Ascending aorta (tissue), 2 donors: ENCODE measurements at regions of chr10 and their contacts with region 1.

Region 1: DNA sequence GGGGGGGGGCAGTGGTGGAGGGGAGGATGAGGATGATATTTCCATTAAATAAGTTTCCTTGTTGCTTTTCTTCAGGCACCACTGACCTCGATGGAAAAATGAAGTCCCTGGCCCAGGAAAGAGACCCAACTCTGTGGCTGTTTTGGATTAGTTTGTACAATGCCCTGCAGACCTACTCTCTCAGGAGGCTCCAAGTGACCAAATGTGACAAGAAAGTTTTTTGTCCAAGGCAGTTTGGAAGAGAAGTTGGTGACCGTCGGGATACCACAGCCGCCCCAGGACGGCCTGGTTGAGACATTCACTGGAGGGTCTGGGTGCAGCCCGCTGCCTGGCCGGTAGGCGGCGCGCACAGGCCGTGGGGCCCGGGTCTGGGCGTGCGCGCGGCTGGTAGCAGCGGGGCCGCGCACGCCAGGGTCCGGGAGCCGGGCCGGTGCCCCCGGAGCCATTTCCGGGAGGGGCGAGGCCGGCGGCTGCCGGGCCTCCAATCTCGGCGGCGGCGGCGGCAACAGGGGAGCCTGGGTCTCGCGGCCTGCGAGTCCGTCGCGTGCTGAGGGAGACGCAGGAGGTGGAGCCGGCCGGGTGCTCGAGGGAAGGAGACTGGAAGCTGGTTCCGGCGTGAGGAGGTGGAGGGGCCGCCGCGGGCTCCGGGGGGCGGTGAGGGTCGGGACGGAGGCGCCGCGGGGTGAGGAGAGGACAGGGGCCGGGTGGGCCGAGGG is at the start of gene SGPL1:
- DNase-seq: peak; percentile 39 to 92
- H3K4me3 ChIP-seq: peak within 1 kb of the TSS; percentile 82 to 90
- H3K27ac ChIP-seq: peak within 1 kb of the TSS; percentile 91 to 98
- H3K4me1 ChIP-seq: peaks cover 0 to 5% of the 10 kb centered on the region in 2 donors
- H3K27me3 ChIP-seq: no peaks in the 10 kb centered on the region
- CTCF ChIP-seq: peak; percentile 81 to 99 (median 86)
- total RNA-seq, gene SGPL1: 6.2 TPM

Region 2: DNA sequence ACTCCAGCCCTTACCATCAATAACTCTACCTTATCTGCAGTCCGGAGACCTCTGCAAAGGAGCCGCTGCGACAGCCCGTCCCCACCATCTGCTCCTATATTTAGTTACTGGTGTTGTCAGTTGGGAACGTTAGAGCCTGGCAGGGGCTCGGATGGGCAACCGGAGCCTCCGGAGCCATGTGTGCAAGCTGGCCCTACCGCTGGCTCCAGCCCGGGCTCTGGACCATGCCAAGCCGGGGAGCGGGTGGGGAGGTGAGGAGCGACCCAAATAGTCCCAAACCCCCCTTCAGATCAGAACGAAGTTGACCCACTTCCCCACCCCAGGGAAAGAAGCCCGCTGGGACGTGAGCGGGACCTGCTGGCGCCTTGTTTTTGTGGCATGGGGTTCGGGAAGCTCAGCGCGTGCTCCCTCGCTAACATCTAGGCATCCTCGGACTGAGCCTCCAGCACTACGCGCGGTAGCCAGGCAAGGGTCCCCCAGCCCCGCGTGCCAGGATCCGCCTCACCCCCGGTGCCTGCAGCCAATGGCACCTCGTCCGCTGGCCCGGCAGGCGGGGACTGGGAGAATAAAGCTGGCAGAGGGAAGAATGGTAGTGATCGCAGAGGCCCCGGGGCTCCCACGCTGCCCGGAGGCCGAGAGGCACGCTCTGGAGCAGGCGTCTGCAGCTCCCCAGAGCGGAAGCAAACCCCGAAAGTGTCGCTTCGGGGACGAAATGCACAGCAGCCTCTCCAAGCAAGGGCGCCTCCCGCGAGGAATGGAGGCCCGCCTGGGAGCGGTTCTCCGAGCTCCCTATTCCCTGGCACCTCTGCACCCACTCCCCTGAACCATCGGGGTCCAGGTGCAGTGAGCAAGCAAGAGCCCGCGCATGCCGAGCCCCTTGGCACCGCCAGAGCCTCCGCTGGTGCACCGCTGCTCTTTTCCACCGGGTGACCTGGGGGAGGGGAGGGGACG is 433.9 kb before region 1 on chr10:
- intact Hi-C with region 1: loop called (anchors 5 kb)
- DNase-seq: peak in 1 of 2 donors; percentile 73
- H3K4me3 ChIP-seq: peak overlapping the region; percentile 70 to 86
- H3K27ac ChIP-seq: peak overlapping the region; percentile 16 to 56
- H3K4me1 ChIP-seq: peaks cover 0 to 7% of the 10 kb centered on the region in 2 donors
- H3K27me3 ChIP-seq: no peaks in the 10 kb centered on the region
- CTCF ChIP-seq: no peak

Region 3: DNA sequence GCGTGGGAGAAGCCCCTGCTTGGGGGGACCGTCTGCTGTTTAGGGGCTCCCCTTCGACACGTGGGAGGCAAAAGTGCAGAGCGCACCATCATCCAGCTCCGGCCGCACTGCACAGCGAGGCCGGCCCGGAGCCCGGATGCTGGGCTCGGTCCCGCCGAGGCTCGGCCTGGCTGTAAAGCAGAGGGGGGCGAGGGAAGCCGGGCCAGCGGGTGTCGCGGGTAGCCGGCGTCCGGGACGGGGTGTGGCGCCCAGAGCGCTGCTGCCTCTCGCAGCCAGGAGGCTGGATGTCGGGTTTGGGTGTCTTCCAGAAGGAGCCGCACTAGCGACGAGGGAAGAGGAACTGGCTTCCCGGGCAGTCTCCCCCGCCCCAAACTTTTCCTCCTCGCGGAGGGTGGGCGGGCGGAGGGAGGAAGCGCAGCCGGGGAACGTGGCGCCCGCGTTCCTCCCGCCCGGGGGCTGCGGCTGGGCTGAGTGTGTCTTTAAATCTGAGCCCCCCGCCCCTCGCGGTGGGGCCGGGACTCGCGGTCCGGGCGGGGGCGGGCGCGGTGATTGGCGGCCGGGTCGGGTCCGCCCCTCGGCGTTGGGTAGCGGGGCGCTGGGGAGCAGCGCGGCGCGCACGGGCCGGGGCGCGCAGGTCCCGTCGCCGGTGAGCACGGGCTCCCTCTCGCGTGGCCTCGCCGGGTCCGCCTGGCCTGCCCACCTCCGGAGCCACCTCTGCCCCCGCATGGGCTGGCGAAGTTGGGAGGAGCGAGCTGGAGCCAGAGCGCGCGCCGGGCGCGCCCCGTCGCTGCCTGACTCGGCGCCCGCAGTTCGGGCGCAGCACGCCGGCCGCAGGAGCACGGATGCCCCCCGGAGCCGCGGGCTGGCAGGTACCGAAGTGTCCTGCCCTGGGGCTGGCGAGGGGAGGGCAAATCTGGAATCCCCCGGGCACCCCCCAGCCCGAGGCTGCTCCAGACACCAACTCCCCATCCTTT is 337.2 kb before region 1 on chr10 and contains the start of gene PALD1:
- intact Hi-C with region 1: loop called (anchors 5 kb)
- DNase-seq: peak in 1 of 2 donors; percentile 83
- H3K4me3 ChIP-seq: peak within 1 kb of the TSS; percentile 69 to 86
- H3K27ac ChIP-seq: peak within 1 kb of the TSS; percentile 81 to 85
- H3K4me1 ChIP-seq: peaks cover 21 to 33% of the 10 kb centered on the region in 2 donors
- H3K27me3 ChIP-seq: no peaks in the 10 kb centered on the region
- CTCF ChIP-seq: peak in 2 of 3 experiments; percentile 18 to 45
- total RNA-seq, gene PALD1: 21.7 TPM

Region 4: GRCh38 chr10:70843776-70844489 is 28.3 kb after region 1 on chr10:
- intact Hi-C with region 1: no loop called
- DNase-seq: no peak
- H3K4me3 ChIP-seq: no peak overlapping the region
- H3K27ac ChIP-seq: no peak overlapping the region
- H3K4me1 ChIP-seq: no peaks in the 10 kb centered on the region
- H3K27me3 ChIP-seq: no peaks in the 10 kb centered on the region
- CTCF ChIP-seq: no peak

Region 5: DNA sequence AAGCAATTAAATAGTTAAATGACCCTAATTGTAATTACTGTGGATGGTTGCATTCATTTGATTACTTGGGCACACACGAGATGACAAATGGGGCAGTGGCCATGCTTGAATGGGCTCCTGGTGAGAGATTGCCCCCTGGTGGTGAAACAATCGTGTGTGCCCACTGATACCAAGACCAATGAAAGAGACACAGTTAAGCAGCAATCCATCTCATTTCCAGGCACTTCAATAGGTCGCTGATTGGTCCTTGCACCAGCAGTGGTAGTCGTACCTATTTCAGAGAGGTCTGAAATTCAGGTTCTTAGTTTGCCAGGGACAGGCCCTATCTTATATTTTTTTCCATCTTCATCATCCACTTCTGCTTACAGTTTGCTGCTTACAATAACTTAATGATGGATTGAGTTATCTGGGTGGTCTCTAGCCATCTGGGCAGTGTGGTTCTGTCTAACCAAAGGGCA is 64.4 kb after region 1 on chr10:
- intact Hi-C with region 1: loop called (anchors 1 kb)
- DNase-seq: peak; percentile 48 to 87
- H3K4me3 ChIP-seq: no peak overlapping the region
- H3K27ac ChIP-seq: no peak overlapping the region
- H3K4me1 ChIP-seq: no peaks in the 10 kb centered on the region
- H3K27me3 ChIP-seq: no peaks in the 10 kb centered on the region
- CTCF ChIP-seq: peak; percentile 83 to 88 (median 85)

Region 6: DNA sequence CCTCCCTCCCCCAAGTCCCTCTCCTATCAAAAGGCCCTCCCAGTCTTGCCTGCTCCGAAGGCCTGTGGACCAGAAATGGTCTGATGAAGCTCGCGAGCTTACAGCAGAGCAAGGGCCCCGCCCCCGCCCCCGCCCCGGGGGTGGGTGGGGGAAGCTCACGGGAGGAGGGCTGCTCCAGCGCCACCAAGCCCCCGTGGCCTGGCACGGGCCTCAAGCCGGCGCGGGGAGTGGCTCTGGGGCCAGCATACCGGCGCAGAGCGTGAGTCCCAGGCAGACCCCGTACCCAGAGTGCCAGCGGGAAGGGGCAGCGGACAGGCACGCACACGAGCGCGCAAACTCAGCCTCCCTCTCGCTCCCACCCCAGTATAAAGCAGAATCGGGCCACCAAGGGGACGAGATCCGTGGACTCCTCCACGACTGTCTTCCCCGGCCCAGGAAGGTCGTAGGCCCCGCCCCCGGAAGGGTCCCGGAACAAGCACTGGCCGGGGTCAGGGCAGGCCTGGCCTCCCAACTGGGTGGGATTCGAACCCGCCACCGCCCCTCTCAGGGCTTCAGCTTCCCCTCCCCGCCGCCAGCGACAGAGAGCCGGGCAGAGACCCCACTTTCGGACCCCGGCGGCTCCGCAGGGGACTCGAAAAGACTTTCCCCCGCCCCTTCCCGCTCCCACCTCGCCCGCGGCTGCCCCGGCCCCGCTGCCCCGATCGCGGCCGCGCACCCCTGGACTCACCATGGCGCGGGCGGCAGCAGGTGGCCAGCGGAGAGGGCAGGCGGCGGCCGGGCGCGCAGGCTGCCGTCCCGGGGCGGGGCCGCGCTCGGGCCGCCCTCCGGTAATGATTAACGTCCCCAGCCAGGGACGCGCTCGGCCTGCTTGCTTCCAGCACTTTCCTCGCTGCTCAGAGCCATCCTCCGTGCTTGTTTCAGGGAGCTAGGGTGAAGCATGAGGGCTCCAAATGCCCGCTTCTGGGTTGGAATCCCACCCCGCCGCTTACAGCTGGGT is 72.4 kb after region 1 on chr10 and contains the start of gene PCBD1:
- intact Hi-C with region 1: loop called (anchors 2 kb)
- DNase-seq: peak; percentile 48 to 93
- H3K4me3 ChIP-seq: peak within 1 kb of the TSS; percentile 79 to 80
- H3K27ac ChIP-seq: peak within 1 kb of the TSS; percentile 92 to 96
- H3K4me1 ChIP-seq: peaks cover 0 to 3% of the 10 kb centered on the region in 2 donors
- H3K27me3 ChIP-seq: no peaks in the 10 kb centered on the region
- CTCF ChIP-seq: peak in 1 of 3 experiments; percentile 9
- total RNA-seq, gene PCBD1: 45.8 TPM

Region 7: DNA sequence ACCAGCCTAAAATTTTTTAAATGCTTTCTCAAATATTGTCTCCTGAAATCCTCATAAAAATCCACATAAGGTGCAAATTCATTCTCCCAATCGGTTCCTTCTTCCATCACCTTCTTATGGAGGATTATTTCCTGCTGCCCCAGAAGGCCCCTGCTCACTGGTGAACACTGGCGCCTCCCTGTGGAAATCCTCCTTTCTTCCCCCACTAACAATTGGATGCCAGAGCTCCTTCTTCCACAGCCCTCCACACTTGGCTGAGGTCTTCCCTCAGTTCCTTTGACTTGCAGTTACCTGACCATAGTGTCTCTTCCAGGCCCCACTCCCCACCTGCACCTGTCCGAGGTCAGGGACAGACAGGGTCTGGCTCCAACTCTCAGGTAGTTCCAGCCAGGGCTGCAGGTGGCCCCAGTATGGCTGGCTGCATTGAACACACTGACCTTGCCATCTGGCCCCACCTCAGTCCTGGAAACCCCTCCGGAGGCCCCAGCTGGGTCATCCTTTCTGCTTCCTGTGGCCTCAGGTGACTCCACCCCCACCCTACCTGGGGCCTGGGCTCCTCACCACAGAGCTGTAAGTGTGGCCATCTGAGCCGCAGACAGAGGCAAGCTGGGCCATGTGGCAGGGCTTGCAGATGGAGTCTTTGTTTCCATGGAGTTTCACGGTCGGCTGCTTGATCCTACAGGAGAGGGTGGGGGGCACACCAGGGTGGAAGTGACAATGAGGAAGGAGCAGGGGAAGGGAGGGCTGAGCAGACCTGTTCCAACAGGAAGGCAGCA is 1254.3 kb after region 1 on chr10:
- intact Hi-C with region 1: no loop called
- DNase-seq: no peak
- H3K4me3 ChIP-seq: no peak overlapping the region
- H3K27ac ChIP-seq: no peak overlapping the region
- H3K4me1 ChIP-seq: no peaks in the 10 kb centered on the region
- H3K27me3 ChIP-seq: no peaks in the 10 kb centered on the region
- CTCF ChIP-seq: no peak